H1 (cell line): ENCODE measurements at regions of chr4 and their contacts with region 1.

Region 1: GRCh38 chr4:15805583-15806517 is 27.7 kb downstream of the CD38 start:
- DNase-seq: no peak
- H3K4me3 ChIP-seq: no peak overlapping the region
- H3K27ac ChIP-seq: no peak overlapping the region
- H3K4me1 ChIP-seq: peaks cover 0 to 3% (median 0%) of the 10 kb centered on the region in 4 experiments; a peak in 1 of 7 replicates
- H3K27me3 ChIP-seq: no peaks in the 10 kb centered on the region
- CTCF ChIP-seq: peak; percentile 0 to 85 (median 78)
- EP300 ChIP-seq: no peak
- POLR2A ChIP-seq: no peak
- RAD21 ChIP-seq: peak; percentile 92 to 95

Region 2: DNA sequence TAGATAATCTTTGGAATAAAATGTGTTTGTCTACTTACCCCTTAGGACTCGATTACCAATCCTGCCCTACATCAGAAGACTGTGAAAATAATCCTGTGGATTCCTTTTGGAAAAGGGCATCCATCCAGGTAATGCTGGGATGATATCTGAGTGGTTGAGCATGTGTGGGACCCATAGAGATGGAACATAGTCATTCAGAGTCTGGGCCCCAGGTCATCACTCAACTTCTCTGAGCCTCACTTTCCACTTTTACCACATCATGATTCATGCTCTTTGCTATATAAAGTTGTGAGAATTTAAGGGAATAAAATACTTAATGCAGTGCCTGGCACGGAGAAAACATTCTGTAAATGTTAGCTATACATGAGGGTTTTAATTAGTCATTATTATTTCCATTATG is 94.1 kb before region 1 on chr4:
- CTCF ChIA-PET with region 1: no interaction called
- POLR2A ChIA-PET with region 1: no interaction called
- DNase-seq: no peak
- H3K4me3 ChIP-seq: no peak overlapping the region
- H3K27ac ChIP-seq: no peak overlapping the region
- H3K4me1 ChIP-seq: peaks cover 0 to 3% (median 0%) of the 10 kb centered on the region in 4 experiments; a peak in 1 of 7 replicates
- H3K27me3 ChIP-seq: peaks cover 0 to 1% (median 0%) of the 10 kb centered on the region in 4 experiments; a peak in 2 of 7 replicates
- CTCF ChIP-seq: no peak
- EP300 ChIP-seq: no peak
- POLR2A ChIP-seq: no peak
- RAD21 ChIP-seq: no peak

Region 3: DNA sequence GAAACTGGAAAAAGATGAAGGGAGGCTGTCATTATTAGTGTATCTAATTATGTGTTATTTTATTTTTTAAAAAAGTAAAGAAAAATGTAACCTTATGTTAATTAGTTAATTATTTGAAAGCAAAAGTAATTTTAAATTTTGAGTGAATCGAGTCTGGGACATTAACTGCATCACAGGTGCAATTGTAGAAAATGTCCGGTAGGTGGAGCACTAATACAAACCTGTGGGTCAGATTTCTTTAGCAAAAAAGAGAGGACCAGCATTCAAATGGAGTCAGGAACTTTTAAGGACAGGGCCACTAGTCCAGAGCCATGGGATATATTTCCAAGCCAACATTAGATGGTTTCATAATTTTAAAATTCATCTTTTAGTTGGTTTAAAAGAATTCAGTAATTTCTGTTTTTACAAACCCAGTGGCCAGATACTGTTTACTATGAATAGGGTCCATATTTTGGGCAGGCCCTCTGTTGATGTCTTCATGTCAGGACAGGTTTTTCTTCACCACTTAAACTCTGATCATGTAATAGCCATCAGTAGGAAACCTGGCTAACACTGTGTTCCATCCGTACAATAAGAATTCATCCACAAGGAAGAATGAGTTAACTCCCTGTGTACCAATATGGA is 75.8 kb before region 1 on chr4:
- CTCF ChIA-PET with region 1: interaction called, 10 read pairs
- POLR2A ChIA-PET with region 1: no interaction called
- DNase-seq: no peak
- H3K4me3 ChIP-seq: no peak overlapping the region
- H3K27ac ChIP-seq: no peak overlapping the region
- H3K4me1 ChIP-seq: no peaks in the 10 kb centered on the region
- H3K27me3 ChIP-seq: no peaks in the 10 kb centered on the region
- CTCF ChIP-seq: peak in 2 of 3 experiments; percentile 50 to 58; a peak in 3 of 4 replicates
- EP300 ChIP-seq: no peak
- POLR2A ChIP-seq: no peak
- RAD21 ChIP-seq: peak; percentile 67 to 69

Region 4: GRCh38 chr4:15875663-15876460 is 70.0 kb after region 1 on chr4:
- CTCF ChIA-PET with region 1: interaction called, 150 read pairs
- POLR2A ChIA-PET with region 1: no interaction called
- DNase-seq: no peak
- H3K4me3 ChIP-seq: no peak overlapping the region
- H3K27ac ChIP-seq: no peak overlapping the region
- H3K4me1 ChIP-seq: no peaks in the 10 kb centered on the region
- H3K27me3 ChIP-seq: no peaks in the 10 kb centered on the region
- CTCF ChIP-seq: no peak
- EP300 ChIP-seq: no peak
- POLR2A ChIP-seq: no peak
- RAD21 ChIP-seq: no peak

Region 5: GRCh38 chr4:15938182-15938581 is 132.3 kb after region 1 on chr4:
- CTCF ChIA-PET with region 1: interaction called, 33 read pairs
- POLR2A ChIA-PET with region 1: no interaction called
- DNase-seq: peak in 1 of 2 experiments; percentile 54
- H3K4me3 ChIP-seq: no peak overlapping the region
- H3K27ac ChIP-seq: no peak overlapping the region
- H3K4me1 ChIP-seq: peaks cover 0 to 9% (median 3%) of the 10 kb centered on the region in 4 experiments; a peak in 2 of 7 replicates
- H3K27me3 ChIP-seq: no peaks in the 10 kb centered on the region
- CTCF ChIP-seq: no peak
- EP300 ChIP-seq: no peak
- POLR2A ChIP-seq: no peak
- RAD21 ChIP-seq: no peak

Region 6: DNA sequence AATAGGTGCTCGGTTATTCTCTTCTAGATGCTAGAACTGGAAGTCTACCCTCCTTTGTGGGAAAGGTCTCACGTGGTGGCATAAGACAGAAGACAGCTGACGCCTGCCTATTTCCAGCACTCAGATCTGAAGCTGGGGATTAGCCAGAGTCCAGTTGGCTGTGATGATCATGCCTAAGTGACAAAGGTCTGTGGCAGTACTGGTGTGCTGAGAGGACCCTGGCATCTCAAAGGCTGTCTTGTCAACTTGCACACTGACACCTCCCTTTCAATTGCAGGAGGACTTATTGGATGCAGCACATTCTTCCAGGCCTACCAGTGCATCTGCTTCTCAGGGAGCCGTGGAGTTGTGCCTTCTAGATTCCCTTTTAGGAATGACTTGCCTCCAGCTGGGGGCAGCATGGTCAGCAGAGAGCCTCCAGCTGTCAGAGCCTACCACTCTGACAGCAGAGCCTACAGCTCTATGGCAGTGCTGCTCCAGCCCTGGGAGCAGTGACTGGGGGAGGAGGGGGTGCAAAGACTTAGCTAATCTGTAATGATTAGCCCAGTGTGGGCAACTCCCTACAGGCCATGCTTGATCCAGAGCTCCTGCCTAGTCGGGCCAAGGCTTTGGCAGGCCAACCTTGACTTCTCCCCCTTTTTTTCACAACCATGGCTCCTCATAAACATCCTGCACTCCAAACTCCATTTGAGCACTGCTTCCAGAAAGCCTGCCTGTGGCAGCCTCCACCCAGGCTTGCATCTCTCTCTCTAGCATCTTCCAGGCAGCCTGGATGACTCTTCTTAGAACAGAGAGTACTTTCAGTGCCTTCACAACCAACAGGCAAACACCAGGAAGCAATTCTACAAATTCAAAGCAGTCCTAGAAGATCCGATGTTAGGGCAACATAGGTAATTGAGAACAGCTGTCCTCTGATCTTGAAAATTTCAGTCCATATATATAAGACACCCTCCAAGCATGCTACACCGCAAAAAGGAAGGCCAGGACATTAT is 170.9 kb after region 1 on chr4:
- CTCF ChIA-PET with region 1: interaction called, 10 read pairs
- POLR2A ChIA-PET with region 1: no interaction called
- DNase-seq: no peak
- H3K4me3 ChIP-seq: no peak overlapping the region
- H3K27ac ChIP-seq: no peak overlapping the region
- H3K4me1 ChIP-seq: no peaks in the 10 kb centered on the region
- H3K27me3 ChIP-seq: no peaks in the 10 kb centered on the region
- CTCF ChIP-seq: peak; percentile 19 to 26 (median 22); a peak in 3 of 4 replicates
- EP300 ChIP-seq: no peak
- POLR2A ChIP-seq: no peak
- RAD21 ChIP-seq: peak in 1 of 2 experiments; percentile 41; a peak in 2 of 4 replicates

Region 7: GRCh38 chr4:16667464-16667863 is 861.6 kb after region 1 on chr4:
- CTCF ChIA-PET with region 1: no interaction called
- POLR2A ChIA-PET with region 1: no interaction called
- DNase-seq: no peak
- H3K4me3 ChIP-seq: no peak overlapping the region
- H3K27ac ChIP-seq: no peak overlapping the region
- H3K4me1 ChIP-seq: peaks cover 0 to under 1% (median 0%) of the 10 kb centered on the region in 4 experiments; a peak in 2 of 7 replicates
- H3K27me3 ChIP-seq: no peaks in the 10 kb centered on the region
- CTCF ChIP-seq: no peak
- EP300 ChIP-seq: no peak
- POLR2A ChIP-seq: no peak
- RAD21 ChIP-seq: no peak